Calu3 (cell line): ENCODE measurements at regions of chr5 and their contacts with region 1.

Region 1: GRCh38 chr5:78221964-78222451 is 72.5 kb downstream of the AP3B1 start:
- DNase-seq: peak; percentile 30
- H3K4me3 Mint-ChIP-seq: no peak overlapping the region
- H3K27ac Mint-ChIP-seq: peak overlapping the region; percentile 60
- H3K4me1 Mint-ChIP-seq: peaks cover 10% of the 10 kb centered on the region
- H3K27me3 Mint-ChIP-seq: no peaks in the 10 kb centered on the region
- CTCF ChIP-seq: peak; percentile 51

Region 2: DNA sequence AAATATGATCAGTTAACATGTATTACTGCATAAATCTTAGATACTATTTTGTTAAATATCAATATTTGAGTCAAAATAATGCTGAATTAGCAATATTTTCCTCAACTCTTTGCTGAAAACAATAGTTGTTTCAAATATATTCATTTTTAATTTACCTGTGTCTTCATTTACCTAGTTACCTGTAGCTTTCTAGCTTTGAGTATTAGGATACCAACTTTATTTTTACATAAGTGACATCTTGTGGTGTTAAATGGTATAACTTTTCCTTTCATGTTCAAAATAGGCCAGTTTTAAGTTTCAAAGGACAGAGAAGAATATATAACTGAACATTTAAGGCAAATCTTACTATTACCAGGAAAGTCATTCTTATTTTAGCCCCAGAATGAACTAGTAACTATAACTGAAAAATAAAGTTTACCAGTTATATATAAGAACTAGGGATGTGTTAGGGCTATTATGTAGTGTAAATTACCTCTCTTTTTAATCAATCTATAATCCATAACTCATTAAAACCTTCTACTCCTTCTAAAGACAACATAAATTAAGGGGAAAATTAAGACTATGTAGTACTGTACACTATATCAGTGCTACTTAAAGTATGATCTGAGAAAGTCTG is 47.2 kb after region 1 on chr5:
- CTCF ChIA-PET with region 1: interaction called, 14 read pairs
- intact Hi-C with region 1: loop called (anchors 5 kb)
- DNase-seq: no peak
- H3K4me3 Mint-ChIP-seq: no peak overlapping the region
- H3K27ac Mint-ChIP-seq: no peak overlapping the region
- H3K4me1 Mint-ChIP-seq: no peaks in the 10 kb centered on the region
- H3K27me3 Mint-ChIP-seq: no peaks in the 10 kb centered on the region
- CTCF ChIP-seq: peak; percentile 43